HEK293 (cell line): ENCODE measurements at regions of chr17 and their contacts with region 1.

Region 1: DNA sequence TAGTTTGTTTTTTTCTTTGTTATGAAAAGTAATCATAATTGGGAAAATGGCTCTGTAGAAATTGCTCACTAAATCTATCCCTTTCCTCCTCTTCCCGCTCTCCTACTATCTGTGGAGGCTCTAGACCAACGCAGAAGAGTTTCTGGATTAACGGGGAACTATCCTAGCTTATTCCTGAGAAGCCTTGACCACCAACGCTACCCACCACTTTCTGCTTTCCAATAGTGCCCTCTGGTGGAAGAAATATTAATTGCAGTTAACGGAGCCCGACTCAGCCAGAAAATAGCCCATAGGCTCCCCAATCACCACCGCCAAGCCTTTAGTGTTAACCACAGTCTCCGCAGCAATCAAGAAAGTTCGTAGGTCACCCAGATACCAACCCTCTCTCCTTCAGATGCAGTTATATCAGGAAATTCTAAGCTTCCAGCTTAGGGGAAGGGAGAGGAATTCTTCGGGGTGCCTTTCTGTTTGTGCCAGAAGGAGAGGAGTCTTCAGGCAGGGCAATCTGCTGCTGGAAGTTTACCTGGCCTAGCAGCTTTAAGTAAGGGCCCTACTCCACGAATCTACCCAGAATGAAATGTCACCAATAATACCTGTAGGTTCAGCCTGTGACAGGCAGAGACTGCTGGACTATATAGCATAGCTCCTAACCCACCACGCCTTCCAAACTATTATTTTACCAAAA is 23.0 kb upstream of the NSRP1 start:
- H3K4me3 ChIP-seq: no peak overlapping the region
- H3K27ac ChIP-seq: no peak overlapping the region
- H3K4me1 ChIP-seq: no peaks in the 10 kb centered on the region
- CTCF ChIP-seq: peak; percentile 84

Region 2: DNA sequence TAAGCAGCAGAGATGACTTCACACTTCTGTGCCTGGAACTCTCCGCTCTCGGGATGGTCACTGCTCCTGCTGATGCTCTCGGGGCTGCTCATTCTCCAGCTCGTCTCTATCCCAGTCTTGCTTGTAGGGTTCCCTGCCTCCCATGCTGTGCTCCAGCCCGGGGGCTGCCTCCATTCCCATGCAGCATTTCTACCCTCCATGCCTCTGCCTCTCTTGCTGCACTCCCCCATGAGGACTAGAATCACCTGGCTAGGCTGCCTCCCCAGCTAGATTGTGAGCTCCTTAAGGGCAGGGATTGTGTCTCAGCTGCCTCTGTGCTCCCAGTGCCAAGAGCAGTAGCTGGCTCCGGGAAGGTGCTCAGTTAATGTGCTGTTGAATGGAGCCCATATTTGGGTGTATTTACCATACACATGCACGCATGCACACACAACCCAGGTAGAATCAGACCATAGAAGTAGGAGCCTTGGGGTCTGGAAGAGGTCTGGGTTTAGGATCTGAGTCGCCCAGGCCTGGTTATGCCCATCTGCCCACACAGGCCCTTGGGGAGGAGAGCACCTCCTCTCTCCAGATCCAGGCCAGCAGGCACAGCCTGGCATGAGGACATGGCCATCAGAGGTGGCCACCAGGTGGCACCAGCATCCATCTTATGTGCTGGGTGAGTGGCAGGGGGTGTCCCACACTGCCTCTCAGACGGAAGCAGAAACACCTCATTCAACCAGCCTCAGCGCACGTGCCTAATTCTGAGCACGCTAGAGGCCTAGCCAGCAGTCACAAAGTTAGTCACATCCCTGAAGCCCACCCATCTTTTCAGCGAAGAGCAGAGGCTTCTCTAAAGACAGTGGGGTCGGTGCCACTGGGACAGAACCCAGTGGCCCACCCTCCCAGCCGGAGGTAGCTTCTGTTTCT is 513.5 kb before region 1 on chr17:
- CTCF ChIA-PET with region 1: interaction called, 13 read pairs
- POLR2A ChIA-PET with region 1: no interaction called
- H3K4me3 ChIP-seq: no peak overlapping the region
- H3K27ac ChIP-seq: no peak overlapping the region
- H3K4me1 ChIP-seq: no peaks in the 10 kb centered on the region
- CTCF ChIP-seq: peak; percentile 97

Region 3: GRCh38 chr17:29640413-29640812 is 453.2 kb before region 1 on chr17:
- CTCF ChIA-PET with region 1: interaction called, 51 read pairs
- POLR2A ChIA-PET with region 1: no interaction called
- H3K4me3 ChIP-seq: no peak overlapping the region
- H3K27ac ChIP-seq: no peak overlapping the region
- H3K4me1 ChIP-seq: peaks cover 35% of the 10 kb centered on the region
- CTCF ChIP-seq: no peak

Region 4: GRCh38 chr17:30000001-30000754 is 93.4 kb before region 1 on chr17:
- CTCF ChIA-PET with region 1: interaction called, 10 read pairs
- POLR2A ChIA-PET with region 1: no interaction called
- H3K4me3 ChIP-seq: no peak overlapping the region
- H3K27ac ChIP-seq: no peak overlapping the region
- H3K4me1 ChIP-seq: no peaks in the 10 kb centered on the region
- CTCF ChIP-seq: no peak

Region 5: GRCh38 chr17:30031214-30031869 is 62.3 kb before region 1 on chr17:
- CTCF ChIA-PET with region 1: interaction called, 137 read pairs
- POLR2A ChIA-PET with region 1: interaction called, 3 read pairs
- H3K4me3 ChIP-seq: no peak overlapping the region
- H3K27ac ChIP-seq: no peak overlapping the region
- H3K4me1 ChIP-seq: no peaks in the 10 kb centered on the region
- CTCF ChIP-seq: no peak

Region 6: DNA sequence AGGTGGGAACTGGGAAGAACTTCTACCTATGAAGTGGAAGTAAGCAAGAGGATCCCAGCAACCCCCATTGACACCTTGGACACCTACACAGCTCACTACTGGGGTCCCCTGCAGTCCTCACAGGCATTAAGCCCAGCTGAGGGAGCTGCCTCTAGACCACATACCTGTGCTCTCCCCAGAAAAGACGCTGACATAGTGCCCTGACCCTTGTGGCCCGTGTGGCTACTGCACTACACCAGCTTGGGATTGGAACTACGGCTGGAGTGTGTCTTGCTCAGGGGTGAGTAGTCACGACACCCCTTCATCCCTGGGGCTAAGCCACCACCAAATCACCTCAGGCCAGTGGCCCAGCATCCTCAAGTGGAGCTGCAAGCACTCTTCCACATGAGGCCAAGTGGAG is 31.2 kb before region 1 on chr17:
- CTCF ChIA-PET with region 1: interaction called, 15 read pairs
- POLR2A ChIA-PET with region 1: no interaction called
- H3K4me3 ChIP-seq: no peak overlapping the region
- H3K27ac ChIP-seq: no peak overlapping the region
- H3K4me1 ChIP-seq: no peaks in the 10 kb centered on the region
- CTCF ChIP-seq: no peak

Region 7: GRCh38 chr17:30104575-30105339 is 11.2 kb after region 1 on chr17:
- CTCF ChIA-PET with region 1: interaction called, 129 read pairs
- POLR2A ChIA-PET with region 1: no interaction called
- H3K4me3 ChIP-seq: peak overlapping the region; percentile 40
- H3K27ac ChIP-seq: peak overlapping the region; percentile 26; the same call in 1 of the 2 replicates
- H3K4me1 ChIP-seq: no peaks in the 10 kb centered on the region
- CTCF ChIP-seq: peak; percentile 83

Region 8: GRCh38 chr17:30165147-30165546 is 71.5 kb after region 1 on chr17:
- CTCF ChIA-PET with region 1: no interaction called
- POLR2A ChIA-PET with region 1: no interaction called
- H3K4me3 ChIP-seq: no peak overlapping the region
- H3K27ac ChIP-seq: no peak overlapping the region
- H3K4me1 ChIP-seq: no peaks in the 10 kb centered on the region
- CTCF ChIP-seq: no peak

Region 9: DNA sequence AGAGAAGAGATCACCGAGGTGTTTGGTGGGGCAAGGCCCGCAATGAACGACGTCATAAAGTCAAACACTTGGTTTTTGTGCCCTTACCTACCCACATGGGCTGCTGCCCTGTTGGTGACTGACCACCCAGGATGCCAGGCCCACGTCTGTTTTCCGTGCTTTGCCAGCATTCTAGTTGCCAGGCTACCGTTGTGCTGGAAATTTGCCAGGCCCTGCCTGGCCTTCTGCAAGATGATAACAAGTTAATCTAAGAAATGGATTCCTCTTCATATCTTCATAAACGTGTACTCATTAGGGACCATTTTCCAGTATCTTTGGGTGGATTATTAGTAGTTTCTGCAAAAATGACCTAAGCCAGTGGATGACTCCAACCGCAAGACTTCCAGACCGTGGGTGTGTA is 106.5 kb after region 1 on chr17:
- CTCF ChIA-PET with region 1: no interaction called
- POLR2A ChIA-PET with region 1: no interaction called
- H3K4me3 ChIP-seq: no peak overlapping the region
- H3K27ac ChIP-seq: no peak overlapping the region
- H3K4me1 ChIP-seq: no peaks in the 10 kb centered on the region
- CTCF ChIP-seq: no peak